ENCODE measurements at regions of chr10 and their contacts with region 1.

Region 1: GRCh38 chr10:27723436-27723835 is 22.2 kb downstream of the MKX start:
- DNase-seq: peak; percentile 90
- H3K4me3 ChIP-seq: no peak overlapping the region
- H3K27me3 ChIP-seq: no peaks in the 10 kb centered on the region
- CTCF ChIP-seq: no peak

Region 2: DNA sequence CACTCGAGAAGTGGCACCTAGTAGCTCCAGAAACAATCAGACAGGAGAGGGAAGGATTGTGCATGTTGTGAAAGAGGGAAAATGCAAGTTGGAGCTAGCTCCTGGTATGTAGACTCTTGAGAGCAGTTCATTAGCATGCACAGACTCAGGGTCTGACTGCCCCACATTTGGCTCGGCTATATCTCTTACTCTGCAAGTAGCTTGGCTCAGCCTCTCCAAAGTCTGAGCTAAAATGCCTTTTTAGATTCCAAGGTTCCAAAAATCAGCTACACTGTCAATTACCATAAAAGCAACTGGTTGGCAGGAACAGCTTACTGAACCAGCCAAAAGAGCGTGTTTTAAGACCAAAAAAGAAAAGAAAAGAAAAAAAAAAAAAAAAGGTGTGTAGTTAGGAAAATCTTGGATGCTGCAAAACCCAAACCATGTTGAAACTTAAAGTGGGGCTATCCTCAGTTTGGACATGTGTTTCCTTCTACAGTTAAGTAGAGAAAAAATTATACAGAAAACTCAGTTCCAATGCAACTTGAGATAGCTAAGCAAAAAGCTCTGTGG is 43.4 kb before region 1 on chr10:
- CTCF ChIA-PET with region 1: no interaction called
- POLR2A ChIA-PET with region 1: no interaction called
- DNase-seq: no peak
- H3K4me3 ChIP-seq: no peak overlapping the region
- H3K27me3 ChIP-seq: no peaks in the 10 kb centered on the region
- CTCF ChIP-seq: no peak

Region 3: GRCh38 chr10:27736396-27736795 is 13.0 kb after region 1 on chr10:
- CTCF ChIA-PET with region 1: interaction called, 5 read pairs
- POLR2A ChIA-PET with region 1: interaction called, 16 read pairs
- DNase-seq: no peak
- H3K4me3 ChIP-seq: no peak overlapping the region
- H3K27me3 ChIP-seq: no peaks in the 10 kb centered on the region
- CTCF ChIP-seq: no peak

Region 4: GRCh38 chr10:27742195-27743011 is 19.0 kb after region 1 on chr10:
- CTCF ChIA-PET with region 1: interaction called, 5 read pairs
- POLR2A ChIA-PET with region 1: interaction called, 14 read pairs
- DNase-seq: peak; percentile 61
- H3K4me3 ChIP-seq: peak overlapping the region; percentile 91
- H3K27me3 ChIP-seq: no peaks in the 10 kb centered on the region
- CTCF ChIP-seq: peak; percentile 56

Region 5: DNA sequence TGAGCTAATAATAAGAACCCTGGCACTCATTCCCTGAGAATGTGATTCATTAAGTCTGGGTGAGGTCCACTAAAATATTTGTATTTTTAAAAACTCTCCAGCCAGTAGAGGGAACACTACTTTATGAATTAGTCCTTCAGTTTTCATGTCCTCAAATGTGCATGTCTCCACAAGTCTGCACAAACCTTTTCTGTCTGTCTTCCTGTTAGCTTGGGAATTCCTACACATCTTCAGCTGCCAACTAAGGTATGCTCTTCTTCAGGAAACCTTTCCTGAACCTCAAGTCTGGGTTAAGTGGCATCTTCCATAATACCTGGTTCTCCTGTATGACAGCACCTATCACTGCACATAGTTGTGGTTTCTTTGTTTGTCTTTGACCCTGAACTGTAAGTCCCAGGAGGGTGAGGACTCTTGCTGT is 141.8 kb after region 1 on chr10:
- CTCF ChIA-PET with region 1: no interaction called
- POLR2A ChIA-PET with region 1: no interaction called
- DNase-seq: peak; percentile 21
- H3K4me3 ChIP-seq: no peak overlapping the region
- H3K27me3 ChIP-seq: no peaks in the 10 kb centered on the region
- CTCF ChIP-seq: no peak; the same call in 1 of the 2 replicates

Measured in BJ (cell line).